H1 (cell line): ENCODE measurements at regions of chr12 and their contacts with region 1.

Region 1: GRCh38 chr12:71947645-71948105 is 9.0 kb downstream of the TPH2 start:
- DNase-seq: peak; percentile 64 to 77
- H3K4me3 ChIP-seq: peak overlapping the region in 1 of 4 experiments; percentile 43; a peak in 3 of 8 replicates
- H3K27ac ChIP-seq: peak overlapping the region; percentile 90
- H3K4me1 ChIP-seq: peaks cover 5 to 37% (median 30%) of the 10 kb centered on the region in 4 experiments
- H3K27me3 ChIP-seq: no peaks in the 10 kb centered on the region
- CTCF ChIP-seq: no peak
- EP300 ChIP-seq: peak; percentile 56 to 98
- POLR2A ChIP-seq: peak; percentile 28 to 63
- RAD21 ChIP-seq: 0 out of 4 replicates have a peak, but pooled peaks of 1 of the 2 experiments have one; percentile 0

Region 2: GRCh38 chr12:71958993-71959578 is 11.4 kb after region 1 on chr12:
- CTCF ChIA-PET with region 1: interaction called, 5 read pairs
- POLR2A ChIA-PET with region 1: interaction called, 14 read pairs
- DNase-seq: no peak
- H3K4me3 ChIP-seq: no peak overlapping the region
- H3K27ac ChIP-seq: no peak overlapping the region
- H3K4me1 ChIP-seq: peaks cover 0 to 14% (median 10%) of the 10 kb centered on the region in 4 experiments; a peak in 3 of 7 replicates
- H3K27me3 ChIP-seq: no peaks in the 10 kb centered on the region
- CTCF ChIP-seq: no peak
- EP300 ChIP-seq: no peak
- POLR2A ChIP-seq: no peak
- RAD21 ChIP-seq: no peak

Region 3: DNA sequence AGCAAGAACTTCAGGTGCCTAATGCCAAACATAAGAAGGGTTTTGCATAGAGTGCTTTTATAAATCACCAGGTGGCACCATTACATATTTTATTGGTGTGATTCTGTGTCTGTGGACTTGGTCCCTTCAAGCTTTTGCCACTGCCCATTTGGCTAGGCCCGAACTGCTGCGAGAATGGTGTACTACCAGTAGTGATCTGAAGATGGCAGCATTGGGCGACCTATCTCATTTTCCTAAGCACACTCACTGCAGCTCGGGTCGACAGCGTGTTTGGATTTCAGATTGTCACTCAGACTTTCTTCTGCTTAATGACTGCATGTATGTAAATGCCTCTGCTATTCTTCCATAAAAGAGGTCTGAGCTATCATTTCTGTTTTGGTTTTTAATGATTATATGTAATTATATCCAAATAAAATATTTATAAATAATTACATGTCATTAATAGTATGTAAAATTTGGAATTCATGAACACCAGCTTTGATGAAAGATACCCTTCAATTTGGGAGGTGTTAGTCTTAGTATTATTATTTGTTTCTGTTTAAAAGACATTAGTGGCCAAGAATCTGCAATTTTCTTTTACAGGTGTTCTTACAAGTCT is 69.5 kb after region 1 on chr12:
- CTCF ChIA-PET with region 1: no interaction called
- POLR2A ChIA-PET with region 1: no interaction called
- DNase-seq: peak; percentile 50 to 89
- H3K4me3 ChIP-seq: no peak overlapping the region
- H3K27ac ChIP-seq: no peak overlapping the region
- H3K4me1 ChIP-seq: no peaks in the 10 kb centered on the region
- H3K27me3 ChIP-seq: no peaks in the 10 kb centered on the region
- CTCF ChIP-seq: peak; percentile 67 to 89 (median 77)
- EP300 ChIP-seq: no peak
- POLR2A ChIP-seq: no peak
- RAD21 ChIP-seq: peak; percentile 92

Region 4: GRCh38 chr12:72230589-72230988 is 282.9 kb after region 1 on chr12:
- CTCF ChIA-PET with region 1: no interaction called
- POLR2A ChIA-PET with region 1: no interaction called
- DNase-seq: no peak
- H3K4me3 ChIP-seq: no peak overlapping the region
- H3K27ac ChIP-seq: no peak overlapping the region
- H3K4me1 ChIP-seq: peaks cover 0 to 2% (median 0%) of the 10 kb centered on the region in 4 experiments; a peak in 2 of 7 replicates
- H3K27me3 ChIP-seq: no peaks in the 10 kb centered on the region
- CTCF ChIP-seq: no peak
- EP300 ChIP-seq: no peak
- POLR2A ChIP-seq: no peak
- RAD21 ChIP-seq: no peak